CD8-positive, alpha-beta T cell (primary cell): ENCODE measurements at regions of chr14 and their contacts with region 1.

Region 1: DNA sequence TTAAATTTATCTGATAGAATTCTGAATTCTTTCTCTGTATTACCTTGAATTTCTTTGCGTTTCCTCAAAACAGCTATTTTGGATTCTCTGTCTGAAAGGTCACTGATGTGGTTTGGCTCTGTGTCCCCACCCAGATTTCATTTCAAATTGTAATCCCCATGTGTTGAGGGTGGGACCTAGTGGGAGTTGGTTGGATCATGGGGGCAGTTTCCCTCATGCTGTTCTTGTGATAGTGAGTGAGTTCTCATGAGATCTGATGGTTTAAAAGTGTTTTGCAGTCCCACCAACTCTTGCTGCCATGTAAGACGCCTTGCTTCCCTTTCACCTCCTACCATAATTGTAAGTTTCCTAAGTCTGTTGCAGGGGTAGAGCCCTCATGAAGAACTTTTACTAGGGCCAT is 34.1 kb upstream of the OR6J1 start:
- DNase-seq: no peak
- ATAC-seq: no peak
- H3K4me3 ChIP-seq: no peak overlapping the region
- H3K4me3 Mint-ChIP-seq: no peak overlapping the region
- H3K27ac ChIP-seq: no peak overlapping the region
- H3K27ac Mint-ChIP-seq: no peak overlapping the region
- H3K4me1 ChIP-seq: no peaks in the 10 kb centered on the region
- H3K4me1 Mint-ChIP-seq: no peaks in the 10 kb centered on the region
- H3K27me3 ChIP-seq: no peaks in the 10 kb centered on the region
- H3K27me3 Mint-ChIP-seq: peaks cover 29% of the 10 kb centered on the region
- CTCF ChIP-seq: no peak

Region 2: DNA sequence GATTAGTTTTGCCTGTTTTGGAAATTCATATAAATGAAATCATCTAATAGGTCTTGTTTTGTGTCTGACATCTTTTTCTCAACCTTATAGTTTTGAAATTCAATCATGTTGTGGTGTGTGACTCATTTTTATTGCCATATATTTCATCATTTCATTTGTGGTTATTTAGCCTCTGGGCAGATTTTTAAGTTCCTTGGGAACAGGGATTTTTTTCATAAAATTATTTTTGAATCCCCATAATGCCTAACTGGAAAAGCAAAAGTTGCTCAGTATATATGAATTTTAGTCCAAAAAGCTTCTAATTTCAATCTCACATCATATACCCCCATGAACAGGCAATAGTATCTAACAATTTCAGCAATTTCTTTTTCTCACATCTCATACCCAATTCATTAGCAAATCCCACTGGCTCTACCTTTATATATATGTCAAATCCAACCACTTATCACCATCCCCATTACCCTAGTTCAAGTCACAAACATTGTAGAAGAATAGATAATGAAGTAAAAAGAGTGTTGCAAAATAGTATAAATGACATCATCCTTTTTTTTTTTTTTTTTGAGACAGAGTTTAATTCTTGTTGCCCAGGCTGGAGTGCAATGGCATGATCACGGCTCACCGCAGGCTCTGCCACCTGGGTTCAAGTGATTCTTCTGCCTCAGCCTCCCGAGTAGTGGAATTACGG is 31.5 kb before region 1 on chr14:
- CTCF ChIA-PET with region 1: no interaction called
- POLR2A ChIA-PET with region 1: no interaction called
- intact Hi-C with region 1: loop called in 1 of 2 experiments (anchors 5 kb)
- DNase-seq: no peak
- ATAC-seq: no peak
- H3K4me3 ChIP-seq: no peak overlapping the region
- H3K4me3 Mint-ChIP-seq: no peak overlapping the region
- H3K27ac ChIP-seq: no peak overlapping the region
- H3K27ac Mint-ChIP-seq: no peak overlapping the region
- H3K4me1 ChIP-seq: no peaks in the 10 kb centered on the region
- H3K4me1 Mint-ChIP-seq: peaks cover 3% of the 10 kb centered on the region
- H3K27me3 ChIP-seq: no peaks in the 10 kb centered on the region
- H3K27me3 Mint-ChIP-seq: no peaks in the 10 kb centered on the region
- CTCF ChIP-seq: no peak